ENCODE measurements at regions of chr16 and their contacts with region 1.

Region 1: DNA sequence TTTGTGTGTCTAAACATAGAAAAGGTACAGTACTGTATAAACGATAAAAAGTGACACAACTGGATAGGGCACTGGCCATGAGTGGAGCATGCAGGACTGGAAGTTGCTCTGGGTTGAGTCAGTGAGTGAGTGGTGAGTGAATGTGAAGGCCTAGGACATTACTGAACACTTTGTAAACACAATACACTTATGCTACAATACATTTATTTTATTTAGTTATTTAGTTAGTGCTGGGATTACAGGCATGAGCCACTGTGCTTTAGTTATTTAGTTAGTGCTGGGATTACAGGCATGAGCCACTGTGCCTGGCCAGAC is 4.6 kb downstream of the CFAP20 start:
- DNase-seq: no peak
- H3K4me3 ChIP-seq: no peak overlapping the region
- CTCF ChIP-seq: no peak

Region 2: GRCh38 chr16:58032710-58033293 is 91.8 kb before region 1 on chr16:
- in situ Hi-C with region 1: loop called (anchors 5 kb)
- DNase-seq: no peak
- H3K4me3 ChIP-seq: no peak overlapping the region
- CTCF ChIP-seq: no peak

Region 3: DNA sequence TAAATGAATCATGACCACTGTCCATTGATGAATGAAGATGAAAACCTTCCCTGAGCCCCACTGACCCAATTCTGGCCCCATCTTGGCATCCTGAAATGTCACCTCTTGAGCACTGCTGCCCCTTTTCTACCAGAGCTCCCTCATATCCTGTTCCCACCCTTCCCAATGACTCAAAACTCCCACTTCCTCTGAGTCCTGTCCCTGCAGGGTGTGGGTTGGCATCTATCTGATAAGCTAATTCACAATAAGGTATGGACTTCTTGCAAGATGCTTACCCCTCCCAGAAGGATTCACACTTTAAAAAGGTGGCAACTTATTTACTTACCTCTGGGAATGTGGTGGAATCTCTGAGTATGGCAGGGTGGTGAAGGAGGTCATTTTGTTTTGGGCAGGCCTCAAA is 86.7 kb after region 1 on chr16:
- in situ Hi-C with region 1: no loop called
- DNase-seq: no peak
- H3K4me3 ChIP-seq: no peak overlapping the region
- CTCF ChIP-seq: no peak